ENCODE measurements at regions of chr13 and their contacts with region 1.

Region 1: DNA sequence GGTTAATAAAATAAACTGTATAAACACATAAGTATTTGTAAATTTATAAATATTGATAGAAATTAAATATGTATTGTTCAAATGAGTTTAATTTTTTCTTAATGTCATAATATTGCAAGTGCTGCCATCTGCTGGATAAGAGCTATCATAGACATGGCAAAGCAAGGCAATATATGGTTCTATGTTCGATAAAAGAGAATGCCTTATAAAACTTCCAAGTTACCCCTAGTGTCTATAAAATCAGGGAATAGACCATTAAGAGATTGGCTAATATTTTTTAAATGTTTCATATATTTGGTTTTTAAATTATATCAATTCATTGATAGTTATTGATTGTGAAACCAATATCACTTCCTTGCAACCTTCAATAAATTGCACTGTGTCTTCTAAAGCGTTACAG is 28.9 kb upstream of the SLITRK6 start:
- DNase-seq: no peak
- H3K4me3 ChIP-seq: no peak overlapping the region
- CTCF ChIP-seq: no peak
- POLR2A ChIP-seq: no peak

Region 2: GRCh38 chr13:84870199-84870598 is 958.0 kb before region 1 on chr13:
- intact Hi-C with region 1: no loop called
- DNase-seq: no peak
- H3K4me3 ChIP-seq: no peak overlapping the region
- CTCF ChIP-seq: no peak
- POLR2A ChIP-seq: no peak

Region 3: DNA sequence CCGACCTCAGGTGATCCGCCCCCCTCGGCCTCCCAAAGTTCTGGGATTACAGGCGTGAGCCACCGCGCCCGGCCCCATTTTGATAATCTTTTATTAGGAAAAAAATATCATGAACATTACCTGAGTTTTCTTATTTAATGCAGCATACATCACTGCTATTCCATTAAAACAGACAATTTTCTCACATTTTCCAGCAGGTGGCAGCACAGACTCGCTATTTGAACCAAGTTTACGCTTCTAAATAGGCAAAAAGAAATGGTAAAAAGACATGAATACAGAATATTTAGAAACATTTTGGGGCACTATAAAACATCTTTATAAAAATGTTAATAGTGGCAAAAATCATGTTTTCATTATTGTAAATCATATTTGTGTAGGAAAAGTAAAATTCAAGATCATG is 932.0 kb before region 1 on chr13:
- intact Hi-C with region 1: loop called (anchors 10 kb)
- DNase-seq: no peak
- H3K4me3 ChIP-seq: no peak overlapping the region
- CTCF ChIP-seq: no peak
- POLR2A ChIP-seq: no peak